HepG2 (cell line): ENCODE measurements at regions of chr19 and their contacts with region 1.

Region 1: GRCh38 chr19:737581-738093 is 13.3 kb upstream of the MISP start:
- DNase-seq: peak; percentile 41
- ATAC-seq: peak; percentile 56
- H3K4me3 ChIP-seq: peak overlapping the region in 1 of 3 experiments; percentile 5; a peak in 1 of 6 replicates
- H3K27ac ChIP-seq: peak overlapping the region; percentile 88
- H3K4me1 ChIP-seq: peaks cover 48% of the 10 kb centered on the region
- H3K27me3 ChIP-seq: no peaks in the 10 kb centered on the region
- CTCF ChIP-seq: peak; percentile 90
- EP300 ChIP-seq: no peak
- POLR2A ChIP-seq: no peak
- RAD21 ChIP-seq: peak; percentile 53; the same call in 1 of the 2 replicates

Region 2: GRCh38 chr19:752652-753517 is 15.2 kb after region 1 on chr19:
- CTCF ChIA-PET with region 1: no interaction called
- POLR2A ChIA-PET with region 1: interaction called, 81 read pairs
- in situ Hi-C with region 1: no loop called
- intact Hi-C with region 1: loop called (anchors 2 kb)
- DNase-seq: peak; percentile 92
- ATAC-seq: peak; percentile 76
- H3K4me3 ChIP-seq: peak overlapping the region in 2 of 3 experiments; percentile 33 to 66; a peak in 4 of 6 replicates
- H3K27ac ChIP-seq: peak overlapping the region; percentile 46
- H3K4me1 ChIP-seq: peaks cover 45% of the 10 kb centered on the region
- H3K27me3 ChIP-seq: no peaks in the 10 kb centered on the region
- CTCF ChIP-seq: no peak
- EP300 ChIP-seq: peak in 1 of 2 experiments; percentile 54; a peak in 1 of 4 replicates
- POLR2A ChIP-seq: no peak
- RAD21 ChIP-seq: no peak

Region 3: GRCh38 chr19:805600-806550 is 68.2 kb after region 1 on chr19:
- CTCF ChIA-PET with region 1: no interaction called
- POLR2A ChIA-PET with region 1: no interaction called
- in situ Hi-C with region 1: no loop called
- intact Hi-C with region 1: no loop called
- DNase-seq: no peak
- ATAC-seq: peak; percentile 14
- H3K4me3 ChIP-seq: no peak overlapping the region
- H3K27ac ChIP-seq: no peak overlapping the region
- H3K4me1 ChIP-seq: peaks cover 18% of the 10 kb centered on the region
- H3K27me3 ChIP-seq: no peaks in the 10 kb centered on the region
- CTCF ChIP-seq: no peak
- EP300 ChIP-seq: no peak
- POLR2A ChIP-seq: no peak; a peak in 2 of 4 replicates
- RAD21 ChIP-seq: no peak

Region 4: DNA sequence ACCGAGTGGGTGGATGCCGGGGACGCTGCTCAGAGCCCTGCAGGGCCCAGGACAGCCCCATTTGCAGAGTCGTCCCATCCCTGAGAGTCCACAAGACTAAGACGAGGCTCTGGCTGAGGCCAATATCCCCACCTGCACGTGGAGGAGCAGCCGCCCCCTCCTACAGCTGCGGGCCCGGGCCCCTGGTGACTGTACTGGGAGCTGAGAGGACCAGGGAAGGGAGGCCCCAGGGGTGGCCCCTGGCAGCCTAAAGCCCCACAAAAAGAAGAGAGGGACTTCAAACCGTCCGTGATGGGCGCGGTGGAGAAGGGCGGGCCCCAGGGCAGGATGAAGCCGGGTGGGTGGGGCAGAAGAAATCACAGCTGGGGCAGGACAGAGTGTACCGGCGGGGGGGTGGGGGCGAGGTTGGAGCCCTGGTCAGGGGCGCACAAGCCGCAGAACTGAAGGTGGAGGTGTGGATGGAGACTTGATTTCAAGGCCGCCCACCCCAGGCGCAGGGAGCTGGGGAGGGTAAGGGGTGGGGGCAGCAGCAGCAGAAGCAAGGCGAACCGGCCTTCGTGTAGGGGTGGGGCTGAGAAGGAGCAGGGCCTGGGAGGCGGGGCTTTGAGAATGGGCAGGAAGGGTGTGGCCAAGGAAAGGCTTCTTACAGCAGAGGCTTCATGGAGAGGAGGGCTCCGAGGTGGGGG is 134.8 kb after region 1 on chr19:
- CTCF ChIA-PET with region 1: no interaction called
- POLR2A ChIA-PET with region 1: no interaction called
- in situ Hi-C with region 1: no loop called
- intact Hi-C with region 1: no loop called
- DNase-seq: no peak
- ATAC-seq: peak; percentile 45
- H3K4me3 ChIP-seq: no peak overlapping the region
- H3K27ac ChIP-seq: peak overlapping the region; percentile 26
- H3K4me1 ChIP-seq: no peaks in the 10 kb centered on the region
- H3K27me3 ChIP-seq: no peaks in the 10 kb centered on the region
- CTCF ChIP-seq: no peak
- EP300 ChIP-seq: no peak
- POLR2A ChIP-seq: no peak
- RAD21 ChIP-seq: no peak

Region 5: GRCh38 chr19:2488942-2489731 is 1751.5 kb after region 1 on chr19:
- CTCF ChIA-PET with region 1: no interaction called
- POLR2A ChIA-PET with region 1: no interaction called
- in situ Hi-C with region 1: no loop called
- intact Hi-C with region 1: no loop called
- DNase-seq: no peak
- ATAC-seq: peak; percentile 48
- H3K4me3 ChIP-seq: peak overlapping the region in 1 of 3 experiments; percentile 62; a peak in 1 of 6 replicates
- H3K27ac ChIP-seq: no peak overlapping the region
- H3K4me1 ChIP-seq: peaks cover 46% of the 10 kb centered on the region
- H3K27me3 ChIP-seq: peaks cover 10 to 46% of the 10 kb centered on the region in 2 experiments
- CTCF ChIP-seq: no peak
- EP300 ChIP-seq: no peak
- POLR2A ChIP-seq: no peak
- RAD21 ChIP-seq: no peak